Head of caudate nucleus (tissue), 42 donors: ENCODE measurements at regions of chr3 and their contacts with region 1.

Region 1: GRCh38 chr3:58299839-58300516 is 6.1 kb upstream of the RPP14 start:
- DNase-seq: peak in 3 of 42 donors; percentile 39 to 68 (median 59)

Region 2: GRCh38 chr3:58188173-58188564 is 111.8 kb before region 1 on chr3:
- intact Hi-C with region 1: loop called (anchors 2 kb)
- DNase-seq: no peak

Region 3: GRCh38 chr3:58237238-58237940 is 62.6 kb before region 1 on chr3 and contains the start of gene ABHD6:
- intact Hi-C with region 1: loop called (anchors 5 kb)
- DNase-seq: peak; percentile 59 to 92 (median 82)